ENCODE measurements at regions of chr16 and their contacts with region 1.

Region 1: GRCh38 chr16:53743149-53743566 is 39.2 kb downstream of the FTO start:
- DNase-seq: no peak
- H3K4me3 ChIP-seq: no peak overlapping the region
- CTCF ChIP-seq: peak; percentile 32

Region 2: DNA sequence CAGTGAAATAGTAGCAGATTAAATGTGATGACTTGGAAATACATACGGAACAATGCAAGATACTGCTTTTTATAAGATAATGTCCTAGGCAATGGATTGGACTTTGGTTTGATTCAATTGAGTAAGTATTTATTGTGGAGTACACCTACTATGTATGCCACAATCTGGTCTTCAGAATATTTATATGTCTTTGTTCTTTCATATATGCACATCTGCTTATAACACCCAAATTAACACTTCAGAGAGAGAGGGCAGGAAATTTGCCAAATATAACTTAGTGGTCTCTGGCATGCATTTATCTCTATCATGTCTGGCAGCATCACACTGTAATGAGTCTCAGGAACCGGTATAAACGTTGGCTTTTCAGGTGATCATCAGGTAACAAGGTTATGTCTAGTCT is 56.4 kb before region 1 on chr16:
- CTCF ChIA-PET with region 1: no interaction called
- POLR2A ChIA-PET with region 1: no interaction called
- DNase-seq: no peak
- H3K4me3 ChIP-seq: no peak overlapping the region
- CTCF ChIP-seq: no peak

Region 3: GRCh38 chr16:53730693-53731092 is 12.5 kb before region 1 on chr16:
- CTCF ChIA-PET with region 1: interaction called, 44 read pairs
- POLR2A ChIA-PET with region 1: no interaction called
- DNase-seq: no peak
- H3K4me3 ChIP-seq: no peak overlapping the region
- CTCF ChIP-seq: no peak

Region 4: GRCh38 chr16:53754909-53755535 is 11.9 kb after region 1 on chr16:
- CTCF ChIA-PET with region 1: interaction called, 19 read pairs
- POLR2A ChIA-PET with region 1: no interaction called
- DNase-seq: no peak
- H3K4me3 ChIP-seq: no peak overlapping the region
- CTCF ChIP-seq: no peak

Region 5: DNA sequence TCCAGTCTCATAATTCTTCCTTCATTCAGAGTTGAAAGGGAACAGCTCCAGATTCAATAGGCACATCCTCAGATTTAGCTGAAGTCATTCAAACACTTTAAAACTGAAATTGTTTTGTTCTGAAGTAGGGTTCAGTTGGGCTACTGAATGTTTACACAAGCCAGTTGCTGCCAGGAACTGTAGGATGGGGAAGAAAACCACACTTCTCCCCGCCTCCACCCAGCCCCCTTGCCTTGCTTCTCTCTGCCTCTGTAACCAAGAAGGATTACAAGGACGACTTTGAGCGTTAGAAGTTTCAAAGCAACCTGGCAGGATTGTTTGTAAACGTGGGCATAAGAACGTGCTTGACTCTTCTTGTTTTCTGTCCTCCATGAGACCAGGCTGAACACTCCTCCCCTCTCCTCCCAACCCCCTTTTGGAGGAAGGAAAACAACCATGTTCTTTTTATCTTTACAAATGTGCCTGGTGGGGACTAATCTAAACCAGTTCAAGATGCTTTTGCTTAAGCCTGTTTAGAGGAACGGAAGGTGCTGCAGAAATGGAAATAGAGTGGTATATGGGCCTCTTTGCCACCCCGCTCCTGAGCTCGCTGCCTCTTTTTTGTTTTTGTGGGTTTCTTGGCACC is 248.7 kb after region 1 on chr16:
- CTCF ChIA-PET with region 1: no interaction called
- POLR2A ChIA-PET with region 1: no interaction called
- DNase-seq: no peak
- H3K4me3 ChIP-seq: no peak overlapping the region
- CTCF ChIP-seq: no peak

Measured in AG04449 (cell line).